Right ventricle myocardium superior (tissue), 1 donor: ENCODE measurements at regions of chr18 and their contacts with region 1.

Region 1: GRCh38 chr18:37537868-37538525 is 27.6 kb downstream of the CELF4 start:
- DNase-seq: peak; percentile 83
- ATAC-seq: peak; percentile 93

Region 2: GRCh38 chr18:37346048-37346447 is 191.9 kb before region 1 on chr18:
- intact Hi-C with region 1: loop called (anchors 10 kb)
- DNase-seq: no peak
- ATAC-seq: no peak

Region 3: GRCh38 chr18:37385846-37386778 is 151.9 kb before region 1 on chr18:
- intact Hi-C with region 1: loop called (anchors 1 kb)
- DNase-seq: no peak
- ATAC-seq: no peak

Region 4: GRCh38 chr18:37445368-37445767 is 92.6 kb before region 1 on chr18:
- intact Hi-C with region 1: loop called (anchors 5 kb)
- DNase-seq: no peak
- ATAC-seq: no peak